ENCODE measurements at regions of chr1 and their contacts with region 1.

Region 1: GRCh38 chr1:199041173-199041914 is 402.5 kb downstream of the PTPRC start:
- DNase-seq: peak; percentile 18
- H3K4me3 Mint-ChIP-seq: no peak overlapping the region
- H3K27ac Mint-ChIP-seq: peak overlapping the region; percentile 49
- H3K4me1 Mint-ChIP-seq: peaks cover 21% of the 10 kb centered on the region
- H3K27me3 Mint-ChIP-seq: no peaks in the 10 kb centered on the region

Region 2: GRCh38 chr1:198534548-198535418 is 506.6 kb before region 1 on chr1:
- CTCF ChIA-PET with region 1: no interaction called
- POLR2A ChIA-PET with region 1: no interaction called
- intact Hi-C with region 1: no loop called
- DNase-seq: no peak
- H3K4me3 Mint-ChIP-seq: peak overlapping the region; percentile 36
- H3K27ac Mint-ChIP-seq: peak overlapping the region; percentile 73
- H3K4me1 Mint-ChIP-seq: peaks cover 68% of the 10 kb centered on the region
- H3K27me3 Mint-ChIP-seq: no peaks in the 10 kb centered on the region

Region 3: GRCh38 chr1:198556971-198557370 is 484.4 kb before region 1 on chr1:
- CTCF ChIA-PET with region 1: no interaction called
- POLR2A ChIA-PET with region 1: no interaction called
- intact Hi-C with region 1: loop called (anchors 5 kb)
- DNase-seq: peak; percentile 74
- H3K4me3 Mint-ChIP-seq: peak overlapping the region; percentile 69
- H3K27ac Mint-ChIP-seq: peak overlapping the region; percentile 49
- H3K4me1 Mint-ChIP-seq: peaks cover 78% of the 10 kb centered on the region
- H3K27me3 Mint-ChIP-seq: no peaks in the 10 kb centered on the region

Region 4: GRCh38 chr1:199054694-199055093 is 13.3 kb after region 1 on chr1:
- CTCF ChIA-PET with region 1: no interaction called
- POLR2A ChIA-PET with region 1: no interaction called
- intact Hi-C with region 1: no loop called
- DNase-seq: no peak
- H3K4me3 Mint-ChIP-seq: no peak overlapping the region
- H3K27ac Mint-ChIP-seq: no peak overlapping the region
- H3K4me1 Mint-ChIP-seq: no peaks in the 10 kb centered on the region
- H3K27me3 Mint-ChIP-seq: no peaks in the 10 kb centered on the region

Region 5: DNA sequence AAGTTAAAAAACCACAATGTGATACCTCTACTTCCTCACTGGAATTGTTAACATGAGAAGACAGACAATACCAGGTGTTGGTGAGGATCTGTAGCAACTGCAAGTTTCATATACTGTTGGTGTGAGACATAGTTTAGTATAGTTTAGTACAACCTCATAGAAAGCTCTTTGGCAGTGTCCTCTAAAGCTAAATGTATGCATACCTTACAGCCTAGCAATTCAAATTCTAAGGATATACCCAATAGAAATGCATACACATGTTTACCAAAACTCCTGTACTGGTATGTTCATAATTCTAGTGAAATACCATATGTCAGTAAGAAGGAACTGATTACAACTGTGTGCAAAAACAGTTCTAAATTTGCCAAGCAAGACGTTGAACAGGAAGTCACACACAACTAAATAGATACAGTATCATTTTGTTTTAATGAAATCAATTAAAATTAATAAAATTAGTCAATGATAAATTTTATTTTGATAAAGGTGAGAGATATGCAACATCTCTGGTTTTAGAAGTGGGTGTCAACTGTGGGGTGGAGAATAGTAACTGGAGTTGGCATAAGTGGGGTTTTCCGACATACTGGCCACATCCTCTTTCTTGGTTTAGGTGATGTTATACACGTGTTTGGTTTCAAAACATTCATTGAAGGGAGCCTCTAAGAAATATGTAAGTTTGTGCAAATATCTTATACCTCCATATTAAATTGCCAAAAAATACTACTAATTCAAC is 48.2 kb after region 1 on chr1:
- CTCF ChIA-PET with region 1: no interaction called
- POLR2A ChIA-PET with region 1: no interaction called
- intact Hi-C with region 1: loop called (anchors 2 kb)
- DNase-seq: peak; percentile 41
- H3K4me3 Mint-ChIP-seq: no peak overlapping the region
- H3K27ac Mint-ChIP-seq: no peak overlapping the region
- H3K4me1 Mint-ChIP-seq: peaks cover 14% of the 10 kb centered on the region
- H3K27me3 Mint-ChIP-seq: no peaks in the 10 kb centered on the region

Region 6: DNA sequence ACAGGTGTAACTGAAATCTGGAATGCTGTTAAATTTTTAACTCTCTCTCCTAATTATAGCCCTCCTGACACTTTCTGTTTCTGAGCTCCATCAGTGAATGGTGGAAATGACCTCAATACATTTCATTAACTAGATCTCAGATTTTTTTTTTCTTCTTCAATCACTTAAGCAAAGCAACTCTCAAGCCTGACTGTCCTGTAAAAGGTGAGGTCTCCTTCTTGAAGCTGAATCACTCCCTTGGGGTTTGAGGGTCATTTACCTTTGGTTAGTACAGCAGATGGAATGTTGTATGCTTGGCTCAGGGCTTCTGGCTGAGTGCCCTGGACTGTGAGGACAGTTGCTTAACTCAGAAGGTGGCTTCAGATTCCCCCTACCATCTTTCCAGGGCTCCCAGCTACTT is 116.2 kb after region 1 on chr1:
- CTCF ChIA-PET with region 1: no interaction called
- POLR2A ChIA-PET with region 1: no interaction called
- intact Hi-C with region 1: no loop called
- DNase-seq: no peak
- H3K4me3 Mint-ChIP-seq: no peak overlapping the region
- H3K27ac Mint-ChIP-seq: no peak overlapping the region
- H3K4me1 Mint-ChIP-seq: peaks cover 15% of the 10 kb centered on the region
- H3K27me3 Mint-ChIP-seq: no peaks in the 10 kb centered on the region

Region 7: DNA sequence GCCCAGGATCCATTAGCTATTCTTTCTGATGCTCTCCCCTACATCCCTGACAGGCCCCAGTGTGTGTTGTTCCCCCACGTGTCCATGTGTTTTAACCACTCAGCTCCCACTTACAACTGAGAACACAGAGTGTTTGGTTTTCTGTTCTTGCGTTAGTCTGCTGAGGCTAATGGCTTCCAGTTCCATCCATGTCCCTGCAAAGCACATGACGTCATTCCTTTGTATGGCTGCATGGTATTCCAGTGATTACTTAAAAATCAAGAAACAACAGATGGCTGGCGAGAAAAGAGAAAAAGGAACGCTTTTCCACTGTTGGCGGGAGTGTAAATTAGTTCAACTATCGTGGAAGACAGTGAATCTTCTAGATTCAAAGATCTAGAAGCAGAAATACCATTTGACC is 153.5 kb after region 1 on chr1:
- CTCF ChIA-PET with region 1: no interaction called
- POLR2A ChIA-PET with region 1: no interaction called
- intact Hi-C with region 1: no loop called
- DNase-seq: no peak
- H3K4me3 Mint-ChIP-seq: no peak overlapping the region
- H3K27ac Mint-ChIP-seq: no peak overlapping the region
- H3K4me1 Mint-ChIP-seq: no peaks in the 10 kb centered on the region
- H3K27me3 Mint-ChIP-seq: no peaks in the 10 kb centered on the region